T-cell (primary cell): ENCODE measurements at regions of chr16 and their contacts with region 1.

Region 1: GRCh38 chr16:17602678-17603077 is 131.9 kb upstream of the XYLT1 start:
- DNase-seq: peak in 1 of 35 experiments; percentile 10
- ATAC-seq: no peak
- H3K4me3 ChIP-seq: no peak overlapping the region
- H3K4me3 Mint-ChIP-seq: no peak overlapping the region
- H3K27ac ChIP-seq: no peak overlapping the region
- H3K27ac Mint-ChIP-seq: no peak overlapping the region
- H3K4me1 ChIP-seq: peaks cover 4 to 10% of the 10 kb centered on the region in 2 experiments
- H3K4me1 Mint-ChIP-seq: peaks cover 12 to 14% (median 12%) of the 10 kb centered on the region in 3 donors
- H3K27me3 ChIP-seq: peaks cover 0 to 7% of the 10 kb centered on the region in 2 experiments
- H3K27me3 Mint-ChIP-seq: peaks cover 5 to 14% of the 10 kb centered on the region in 2 donors

Region 2: DNA sequence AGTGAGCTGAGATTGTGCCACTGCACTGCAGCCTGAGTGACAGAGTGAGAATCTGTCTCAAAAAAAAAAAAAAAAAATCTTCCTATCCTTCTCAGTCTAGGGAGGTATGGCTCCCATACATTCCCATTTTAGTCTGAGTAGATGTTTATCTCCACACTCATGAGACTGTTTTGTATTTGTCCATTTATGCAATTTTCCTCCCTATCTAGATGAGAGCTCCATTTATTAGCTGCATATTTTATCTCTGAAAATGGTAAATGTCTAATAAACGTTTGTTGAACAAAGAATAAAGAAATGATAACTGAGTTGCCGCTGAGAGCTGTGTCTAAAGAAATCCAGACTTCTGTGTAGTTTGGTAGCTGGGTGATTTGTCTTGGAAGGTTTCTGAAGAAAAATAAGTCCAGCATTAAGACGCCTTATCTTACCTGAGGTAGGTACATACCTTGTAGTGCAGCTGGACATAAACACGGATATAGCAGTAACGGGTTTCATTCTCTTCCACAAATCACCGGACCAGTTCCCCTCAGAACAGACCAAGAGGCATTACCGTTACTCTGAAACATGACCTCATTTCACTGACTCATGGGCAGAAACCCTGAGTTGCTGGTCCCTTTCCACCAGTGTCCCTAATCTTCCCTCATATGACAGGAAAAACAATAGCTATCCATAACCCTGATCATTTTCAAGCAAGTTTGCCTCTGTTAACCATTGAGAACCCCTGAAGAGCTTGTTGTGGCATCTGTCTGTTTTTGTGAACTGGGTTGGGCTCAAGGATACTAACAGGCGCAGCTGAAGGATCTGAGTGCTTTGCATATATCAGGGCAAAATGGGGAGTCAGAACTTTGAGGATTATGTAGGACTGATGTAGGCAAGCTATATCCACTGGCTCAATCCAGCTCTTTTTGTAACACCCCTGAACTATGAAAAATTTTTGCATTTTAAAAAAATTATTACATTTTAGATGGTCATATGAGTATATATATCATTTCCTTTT is 45.5 kb after region 1 on chr16:
- CTCF ChIA-PET with region 1: no interaction called
- POLR2A ChIA-PET with region 1: no interaction called
- DNase-seq: no peak
- ATAC-seq: no peak
- H3K4me3 ChIP-seq: no peak overlapping the region
- H3K4me3 Mint-ChIP-seq: no peak overlapping the region
- H3K27ac ChIP-seq: no peak overlapping the region
- H3K27ac Mint-ChIP-seq: no peak overlapping the region
- H3K4me1 ChIP-seq: no peaks in the 10 kb centered on the region
- H3K4me1 Mint-ChIP-seq: no peaks in the 10 kb centered on the region
- H3K27me3 ChIP-seq: peaks cover 3 to 12% of the 10 kb centered on the region in 2 experiments
- H3K27me3 Mint-ChIP-seq: peaks cover 18 to 19% of the 10 kb centered on the region in 2 donors

Region 3: GRCh38 chr16:17658881-17659280 is 56.2 kb after region 1 on chr16:
- CTCF ChIA-PET with region 1: interaction called in 1 of 2 experiments, 10 read pairs
- POLR2A ChIA-PET with region 1: no interaction called
- DNase-seq: no peak
- ATAC-seq: no peak
- H3K4me3 ChIP-seq: no peak overlapping the region
- H3K4me3 Mint-ChIP-seq: no peak overlapping the region
- H3K27ac ChIP-seq: no peak overlapping the region
- H3K27ac Mint-ChIP-seq: no peak overlapping the region
- H3K4me1 ChIP-seq: no peaks in the 10 kb centered on the region
- H3K4me1 Mint-ChIP-seq: peaks cover 0 to 11% (median 0%) of the 10 kb centered on the region in 3 donors
- H3K27me3 ChIP-seq: peaks cover 0 to under 1% of the 10 kb centered on the region in 2 experiments
- H3K27me3 Mint-ChIP-seq: peaks cover 15 to 19% of the 10 kb centered on the region in 2 donors